ENCODE measurements at regions of chr2 and their contacts with region 1.

Region 1: GRCh38 chr2:217277646-217278398 is 418.0 kb upstream of the TNP1 start:
- DNase-seq: no peak
- ATAC-seq: peak; percentile 26

Region 2: GRCh38 chr2:217086038-217086522 is 191.7 kb before region 1 on chr2:
- intact Hi-C with region 1: loop called (anchors 10 kb)
- DNase-seq: no peak
- ATAC-seq: no peak

Region 3: GRCh38 chr2:217231212-217231611 is 46.6 kb before region 1 on chr2:
- intact Hi-C with region 1: no loop called
- DNase-seq: no peak
- ATAC-seq: no peak